Activated CD8-positive, alpha-beta T cell treated with anti-CD3 and anti-CD28 coated beads for 36 hours (primary cell): ENCODE measurements at regions of chr11 and their contacts with region 1.

Region 1: GRCh38 chr11:59918987-59919589 is 19.1 kb upstream of the OOSP1 start:
- DNase-seq: peak; percentile 58
- ATAC-seq: no peak
- H3K4me3 Mint-ChIP-seq: no peak overlapping the region
- H3K27ac Mint-ChIP-seq: no peak overlapping the region
- H3K4me1 Mint-ChIP-seq: no peaks in the 10 kb centered on the region
- H3K27me3 Mint-ChIP-seq: peaks cover 2% of the 10 kb centered on the region
- CTCF ChIP-seq: peak; percentile 49

Region 2: GRCh38 chr11:59822989-59823566 is 96.0 kb before region 1 on chr11:
- CTCF ChIA-PET with region 1: interaction called, 3 read pairs
- POLR2A ChIA-PET with region 1: no interaction called
- intact Hi-C with region 1: loop called (anchors 5 kb)
- DNase-seq: peak; percentile 54
- ATAC-seq: peak; percentile 76
- H3K4me3 Mint-ChIP-seq: no peak overlapping the region
- H3K27ac Mint-ChIP-seq: no peak overlapping the region
- H3K4me1 Mint-ChIP-seq: peaks cover 8% of the 10 kb centered on the region
- H3K27me3 Mint-ChIP-seq: peaks cover 4% of the 10 kb centered on the region
- CTCF ChIP-seq: peak; percentile 67